ENCODE measurements at regions of chr1 and their contacts with region 1.

Region 1: GRCh38 chr1:110390692-110391245 is at the start of gene SLC16A4:
- H3K4me3 ChIP-seq: peak within 1 kb of the TSS; percentile 7
- H3K27ac ChIP-seq: no peak within 1 kb of the TSS
- H3K4me1 ChIP-seq: no peaks in the 10 kb centered on the region; the same call in 1 of the 2 replicates
- CTCF ChIP-seq: no peak

Region 2: DNA sequence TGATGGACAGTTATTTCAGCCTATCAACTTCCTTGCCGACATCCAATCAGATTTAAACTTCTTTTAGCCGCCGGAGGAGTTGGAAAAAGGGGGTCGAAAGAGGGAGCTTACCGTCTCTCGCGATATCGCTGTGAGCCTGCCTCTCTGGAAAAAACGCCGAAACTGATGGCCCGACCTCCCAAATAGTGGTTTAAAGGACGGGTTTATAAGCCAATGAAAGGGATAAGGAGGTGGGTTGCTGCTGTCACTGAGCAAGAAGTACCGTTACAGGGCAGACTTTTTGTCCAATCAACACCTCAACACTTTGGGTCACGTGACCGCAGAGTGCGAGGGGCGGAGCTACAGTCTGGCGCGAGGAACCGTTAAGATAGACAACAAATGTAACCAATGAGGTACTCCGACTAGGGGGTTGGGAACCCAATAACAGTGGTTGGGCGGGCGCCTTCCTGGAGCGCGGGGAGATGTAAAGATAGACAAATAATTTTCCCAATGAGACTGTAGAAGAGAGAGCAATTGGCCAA is 51.8 kb before region 1 on chr1 and contains the start of gene RBM15:
- CTCF ChIA-PET with region 1: interaction called, 3 read pairs
- POLR2A ChIA-PET with region 1: interaction called, 10 read pairs
- H3K4me3 ChIP-seq: peak within 1 kb of the TSS; percentile 78
- H3K27ac ChIP-seq: peak within 1 kb of the TSS; percentile 88
- H3K4me1 ChIP-seq: peaks cover 13% of the 10 kb centered on the region
- CTCF ChIP-seq: no peak

Measured in HEK293 (cell line).